ENCODE measurements at regions of chr18 and their contacts with region 1.

Region 1: GRCh38 chr18:34370704-34371405 is 146.1 kb upstream of the NOL4 start:
- DNase-seq: no peak
- H3K4me3 ChIP-seq: no peak overlapping the region
- H3K27ac ChIP-seq: no peak overlapping the region
- H3K4me1 ChIP-seq: peaks cover 0 to 14% (median 5%) of the 10 kb centered on the region in 4 donors
- H3K27me3 ChIP-seq: no peaks in the 10 kb centered on the region
- CTCF ChIP-seq: no peak
- EP300 ChIP-seq: no peak
- POLR2A ChIP-seq: no peak

Region 2: DNA sequence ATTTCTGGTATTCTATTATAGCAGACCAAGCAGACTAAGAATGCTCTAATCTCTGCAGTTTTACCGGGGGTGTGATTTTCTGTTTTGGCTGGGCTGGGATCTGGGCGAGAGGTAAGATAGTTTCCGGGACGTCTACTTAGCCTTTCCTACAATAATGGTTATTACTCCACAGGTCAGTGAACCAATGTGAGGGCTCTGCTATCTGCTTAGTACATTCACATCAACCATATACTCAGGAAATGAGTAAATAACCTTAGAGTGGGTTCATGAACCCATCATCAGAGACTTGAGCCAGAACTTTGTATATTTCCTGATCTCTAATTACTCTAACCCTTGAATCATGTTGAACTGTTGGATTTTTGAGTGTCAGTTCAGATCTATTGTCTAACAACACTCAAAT is 56.0 kb before region 1 on chr18:
- in situ Hi-C with region 1: loop called in 1 of 4 experiments (anchors 10 kb)
- intact Hi-C with region 1: no loop called
- DNase-seq: no peak
- H3K4me3 ChIP-seq: no peak overlapping the region
- H3K27ac ChIP-seq: no peak overlapping the region
- H3K4me1 ChIP-seq: no peaks in the 10 kb centered on the region
- H3K27me3 ChIP-seq: no peaks in the 10 kb centered on the region
- CTCF ChIP-seq: no peak
- EP300 ChIP-seq: no peak
- POLR2A ChIP-seq: no peak